GM23248 (cell line): ENCODE measurements at regions of chrX and their contacts with region 1.

Region 1: GRCh38 chrX:2608638-2609430 is 82.3 kb upstream of the CD99 start:
- DNase-seq: peak; percentile 87
- H3K4me3 ChIP-seq: peak overlapping the region; percentile 94
- H3K27ac ChIP-seq: no peak overlapping the region
- H3K4me1 ChIP-seq: peaks cover 8% of the 10 kb centered on the region
- H3K27me3 ChIP-seq: no peaks in the 10 kb centered on the region

Region 2: GRCh38 chrX:1453951-1454785 is 1154.7 kb before region 1 on chrX:
- in situ Hi-C with region 1: loop called (anchors 10 kb)
- DNase-seq: peak; percentile 83
- H3K4me3 ChIP-seq: peak overlapping the region; percentile 47; the same call in 1 of the 2 replicates
- H3K27ac ChIP-seq: no peak overlapping the region
- H3K4me1 ChIP-seq: no peaks in the 10 kb centered on the region
- H3K27me3 ChIP-seq: no peaks in the 10 kb centered on the region

Region 3: GRCh38 chrX:1870421-1870820 is 738.4 kb before region 1 on chrX:
- in situ Hi-C with region 1: no loop called
- DNase-seq: no peak
- H3K4me3 ChIP-seq: no peak overlapping the region
- H3K27ac ChIP-seq: no peak overlapping the region
- H3K4me1 ChIP-seq: no peaks in the 10 kb centered on the region
- H3K27me3 ChIP-seq: no peaks in the 10 kb centered on the region

Region 4: DNA sequence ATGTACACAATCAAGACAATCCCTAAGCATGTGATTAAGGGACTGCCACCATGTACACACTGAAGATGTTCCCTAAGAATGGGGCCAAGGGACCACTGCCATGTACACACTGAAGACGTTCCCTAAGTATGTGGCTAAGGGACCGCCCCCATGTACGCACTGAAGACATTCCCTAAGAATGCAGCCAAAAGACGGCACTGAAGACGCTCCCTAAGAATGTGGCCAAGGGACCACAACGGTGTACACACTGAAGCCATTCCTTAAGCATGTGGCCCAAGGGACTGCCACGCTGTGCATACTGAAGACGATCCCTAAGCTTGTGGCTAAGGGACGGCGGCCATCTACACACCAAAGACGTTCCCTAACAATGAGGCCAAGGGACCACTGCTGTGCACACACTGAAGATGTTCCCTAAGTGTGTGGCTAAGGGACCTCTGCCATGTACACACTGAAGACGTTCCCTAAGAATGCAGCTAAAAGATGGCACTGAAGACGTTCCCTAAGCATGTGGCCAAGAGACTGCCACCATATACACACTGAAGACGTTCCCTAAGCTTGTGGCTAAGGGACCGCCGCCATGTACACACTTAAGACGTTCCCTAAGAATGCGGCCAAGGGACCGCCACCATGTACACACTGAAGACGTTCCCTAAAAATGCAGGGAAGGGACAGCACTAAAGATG is 134.4 kb before region 1 on chrX:
- in situ Hi-C with region 1: no loop called
- DNase-seq: no peak
- H3K4me3 ChIP-seq: no peak overlapping the region
- H3K27ac ChIP-seq: no peak overlapping the region
- H3K4me1 ChIP-seq: no peaks in the 10 kb centered on the region
- H3K27me3 ChIP-seq: no peaks in the 10 kb centered on the region

Region 5: DNA sequence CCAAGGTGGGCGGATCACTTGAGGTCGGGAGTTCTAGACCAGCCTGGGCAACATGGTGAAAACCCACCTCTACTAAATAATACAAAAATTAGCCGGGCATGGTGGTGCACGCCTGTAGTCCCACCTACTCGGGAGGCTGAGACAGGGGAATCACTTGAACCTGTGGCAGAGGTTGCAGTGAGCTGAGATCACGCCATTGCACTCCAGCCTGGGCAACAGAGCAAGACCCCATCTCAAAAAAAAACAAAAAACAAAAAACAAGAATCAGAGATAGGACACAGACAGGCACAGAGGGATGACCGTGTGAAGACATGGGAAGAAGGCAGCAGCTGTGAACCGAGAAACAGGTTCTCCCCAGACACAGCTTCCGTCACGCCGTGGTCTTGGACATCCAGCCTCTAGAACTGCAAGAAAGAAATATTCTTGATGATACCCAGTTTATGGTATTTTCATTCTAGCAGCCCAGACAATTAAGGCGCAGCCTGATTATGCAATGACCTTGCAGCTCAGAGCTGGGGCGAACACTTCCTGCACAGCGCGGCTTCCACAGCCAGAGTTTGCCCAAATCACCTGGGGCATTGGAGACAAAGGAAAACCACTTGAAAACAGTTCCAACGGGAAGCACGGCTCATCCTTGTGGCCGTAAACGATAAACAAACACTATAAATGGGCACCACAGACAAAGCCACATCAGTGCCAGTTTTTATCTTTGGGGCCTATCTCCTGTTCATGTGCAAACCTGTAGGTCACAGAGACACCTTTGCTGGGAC is 324.5 kb after region 1 on chrX:
- in situ Hi-C with region 1: no loop called
- DNase-seq: no peak
- H3K4me3 ChIP-seq: no peak overlapping the region
- H3K27ac ChIP-seq: no peak overlapping the region
- H3K4me1 ChIP-seq: no peaks in the 10 kb centered on the region
- H3K27me3 ChIP-seq: no peaks in the 10 kb centered on the region